ENCODE measurements at regions of chr12 and their contacts with region 1.

Region 1: GRCh38 chr12:39145175-39145999 is 240.0 kb upstream of the CPNE8 start:
- DNase-seq: peak; percentile 58 to 79
- ATAC-seq: peak; percentile 99

Region 2: DNA sequence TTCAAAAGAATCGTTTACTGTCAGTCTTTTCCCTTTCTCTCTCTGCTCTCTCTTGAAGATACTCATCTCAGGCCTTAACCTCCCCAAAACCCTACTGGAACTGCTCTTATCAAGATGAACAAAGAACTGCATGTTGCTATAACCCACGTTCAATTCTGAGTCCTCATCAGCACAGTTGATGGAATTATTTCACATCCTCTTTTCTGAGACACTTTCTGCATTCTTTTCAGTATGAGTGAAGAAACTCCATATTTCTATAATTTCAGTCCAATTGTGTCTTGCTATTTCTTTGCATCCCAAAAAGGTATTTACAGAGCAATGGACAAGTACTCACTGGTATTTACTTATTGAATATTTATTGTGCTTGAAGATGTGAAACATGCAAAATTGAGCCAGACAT is 79.9 kb before region 1 on chr12:
- intact Hi-C with region 1: no loop called
- DNase-seq: no peak
- ATAC-seq: no peak

Region 3: DNA sequence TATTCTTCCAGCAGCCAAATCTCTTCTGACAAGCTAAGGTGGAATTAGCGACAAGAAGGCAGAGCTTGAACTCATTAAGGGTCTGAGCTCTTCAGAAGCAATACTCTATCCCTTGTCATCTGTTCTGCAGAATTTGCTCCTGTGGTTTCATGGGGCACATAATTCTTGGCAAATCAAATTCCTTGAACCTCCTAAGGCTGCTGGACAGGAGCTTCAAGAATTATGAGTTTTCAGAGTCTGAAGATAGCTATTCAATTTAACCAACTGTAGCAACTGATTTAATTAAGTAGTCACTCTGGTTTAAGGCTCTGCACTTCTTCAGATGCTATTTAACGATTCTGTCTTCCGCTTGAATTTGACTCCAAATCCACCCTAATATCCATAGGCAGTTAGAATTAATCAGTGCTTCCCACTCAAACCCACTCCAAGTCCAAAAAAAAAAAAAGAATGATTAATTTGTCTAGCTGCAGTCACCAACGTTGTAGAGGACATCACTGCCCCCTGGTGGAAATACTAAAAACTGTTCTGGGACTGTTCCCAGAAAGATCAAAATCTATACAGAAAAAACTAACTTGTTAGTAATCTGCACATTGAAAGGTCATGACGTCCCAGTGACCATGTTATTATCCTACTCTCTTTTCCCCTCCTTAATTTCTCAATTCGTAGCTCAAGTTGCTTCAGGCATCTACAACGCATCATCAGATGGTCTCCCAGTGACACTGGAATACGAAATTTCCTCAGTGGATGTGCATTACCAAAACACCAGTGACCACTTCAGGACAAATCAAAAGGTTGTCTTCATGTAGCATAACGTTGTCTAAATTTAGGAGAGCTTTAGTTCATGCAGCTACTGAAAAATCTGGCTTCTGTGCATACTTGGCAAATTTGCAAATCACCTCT is 127.7 kb after region 1 on chr12:
- intact Hi-C with region 1: loop called in 1 of 2 experiments (anchors 5 kb)
- DNase-seq: peak in 1 of 2 donors; percentile 6
- ATAC-seq: peak; percentile 45

Measured in left colon (tissue), 2 donors.